Naive thymus-derived CD4-positive, alpha-beta T cell (primary cell): ENCODE measurements at regions of chr6 and their contacts with region 1.

Region 1: GRCh38 chr6:2634139-2634964 is 116.4 kb downstream of the MYLK4 start:
- DNase-seq: peak; percentile 65 to 88 (median 81)
- ATAC-seq: peak; percentile 97
- H3K4me3 ChIP-seq: peak overlapping the region; percentile 47
- H3K4me3 Mint-ChIP-seq: peak overlapping the region; percentile 65 to 85 (median 78)
- H3K27ac ChIP-seq: no peak overlapping the region
- H3K27ac Mint-ChIP-seq: peak overlapping the region in 4 of 9 donors; percentile 32 to 51 (median 46)
- H3K4me1 ChIP-seq: no peaks in the 10 kb centered on the region
- H3K4me1 Mint-ChIP-seq: peaks cover 0 to 7% (median 0%) of the 10 kb centered on the region in 7 donors
- H3K27me3 ChIP-seq: no peaks in the 10 kb centered on the region
- H3K27me3 Mint-ChIP-seq: peaks cover 14 to 37% (median 21%) of the 10 kb centered on the region in 5 donors

Region 2: GRCh38 chr6:797479-798077 is 1836.8 kb before region 1 on chr6:
- CTCF ChIA-PET with region 1: no interaction called
- POLR2A ChIA-PET with region 1: no interaction called
- intact Hi-C with region 1: loop called in 1 of 2 experiments (anchors 5 kb)
- DNase-seq: peak in 5 of 9 donors; percentile 18 to 36 (median 22)
- ATAC-seq: peak; percentile 61
- H3K4me3 ChIP-seq: no peak overlapping the region
- H3K4me3 Mint-ChIP-seq: no peak overlapping the region
- H3K27ac ChIP-seq: no peak overlapping the region
- H3K27ac Mint-ChIP-seq: no peak overlapping the region
- H3K4me1 ChIP-seq: no peaks in the 10 kb centered on the region
- H3K4me1 Mint-ChIP-seq: no peaks in the 10 kb centered on the region
- H3K27me3 ChIP-seq: peaks cover 0 to 11% of the 10 kb centered on the region in 2 donors
- H3K27me3 Mint-ChIP-seq: peaks cover 47 to 67% (median 51%) of the 10 kb centered on the region in 5 donors

Region 3: DNA sequence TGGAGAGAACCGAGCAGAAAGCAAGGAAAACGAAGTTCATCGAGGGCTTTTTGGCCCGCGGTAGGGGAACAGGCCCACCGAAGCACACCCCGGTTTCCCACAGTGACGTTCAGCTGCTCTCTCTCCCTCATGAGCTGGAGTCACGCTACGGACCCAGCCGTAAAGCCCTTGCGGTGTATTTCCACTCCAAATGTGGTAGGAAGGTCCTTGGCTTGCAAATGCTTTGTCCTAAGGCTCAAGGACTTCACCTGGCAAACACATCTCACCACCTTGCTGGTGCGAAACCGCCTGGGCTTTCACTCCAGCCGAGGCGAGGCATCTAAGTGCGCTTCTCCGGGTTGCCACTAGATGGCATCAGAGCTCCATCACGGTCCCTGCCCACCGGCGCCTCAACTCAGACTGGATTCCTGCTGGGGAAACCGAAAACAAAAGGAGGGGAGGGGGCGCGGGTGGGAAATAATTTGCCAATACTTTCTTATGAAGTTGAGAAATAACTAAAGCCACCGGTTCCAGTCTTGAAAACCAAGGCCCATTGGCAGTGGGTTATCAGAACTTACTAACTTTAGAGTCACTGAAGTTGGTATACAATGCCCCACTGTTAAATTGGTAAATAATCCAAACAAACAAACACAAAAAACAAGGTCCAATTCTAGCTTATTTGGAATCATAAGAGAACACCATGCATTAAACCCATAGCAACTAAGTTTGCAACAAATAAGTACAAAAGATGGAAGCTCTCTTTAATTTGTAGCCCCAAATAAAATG is 1038.1 kb before region 1 on chr6:
- CTCF ChIA-PET with region 1: interaction called, 58 read pairs
- POLR2A ChIA-PET with region 1: no interaction called
- intact Hi-C with region 1: loop called (anchors 1 kb)
- DNase-seq: peak in 8 of 9 donors; percentile 45 to 76 (median 63)
- ATAC-seq: peak; percentile 90
- H3K4me3 ChIP-seq: no peak overlapping the region
- H3K4me3 Mint-ChIP-seq: peak overlapping the region in 6 of 10 donors; percentile 7 to 42 (median 30)
- H3K27ac ChIP-seq: no peak overlapping the region
- H3K27ac Mint-ChIP-seq: peak overlapping the region in 1 of 9 donors; percentile 28
- H3K4me1 ChIP-seq: peaks cover 0 to 4% of the 10 kb centered on the region in 2 donors
- H3K4me1 Mint-ChIP-seq: peaks cover 4 to 9% (median 7%) of the 10 kb centered on the region in 7 donors
- H3K27me3 ChIP-seq: peaks cover 0 to 4% of the 10 kb centered on the region in 2 donors
- H3K27me3 Mint-ChIP-seq: peaks cover 59 to 68% (median 60%) of the 10 kb centered on the region in 5 donors

Region 4: DNA sequence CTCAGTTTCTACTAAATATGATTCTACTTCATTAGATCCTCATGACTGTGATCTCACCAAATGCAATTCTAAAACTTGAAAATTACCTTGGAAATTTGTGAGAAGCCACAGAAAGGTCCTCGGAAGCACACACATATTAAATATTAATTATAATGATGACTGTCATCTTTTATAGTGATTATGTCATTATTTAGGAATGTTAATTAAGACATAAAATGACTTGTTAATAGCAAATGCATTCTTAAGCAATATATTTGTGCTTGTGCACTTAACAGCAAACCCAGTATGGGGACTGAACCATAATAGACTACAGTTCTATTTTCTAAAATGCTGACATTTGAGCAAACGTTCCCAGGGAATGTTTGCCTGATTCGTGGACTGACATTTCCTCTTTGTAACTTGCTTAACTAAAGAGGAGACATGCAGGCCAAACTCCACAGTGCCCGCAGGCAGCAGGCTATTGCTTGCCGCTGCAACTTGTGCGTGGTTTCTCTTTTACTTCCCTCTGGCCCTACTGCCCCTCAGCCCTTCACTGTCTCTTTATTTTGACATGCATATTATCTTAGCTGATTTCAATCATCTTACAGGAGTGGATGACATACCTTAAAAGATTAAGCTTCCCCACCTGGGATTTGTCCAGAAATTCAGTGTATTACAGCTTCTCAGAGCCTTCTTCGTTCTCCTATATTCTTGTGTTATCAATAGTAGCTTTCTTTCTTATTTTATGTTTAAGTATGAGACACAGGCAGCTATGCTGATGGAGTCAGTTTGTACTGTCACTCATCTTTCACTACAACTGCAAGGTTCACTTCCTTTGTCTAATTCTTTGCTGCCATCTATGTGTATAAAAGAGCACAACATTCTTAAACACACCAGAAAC is 530.5 kb before region 1 on chr6:
- CTCF ChIA-PET with region 1: interaction called, 3 read pairs
- POLR2A ChIA-PET with region 1: no interaction called
- intact Hi-C with region 1: loop called (anchors 1 to 5 kb)
- DNase-seq: peak in 6 of 9 donors; percentile 11 to 48 (median 30)
- ATAC-seq: peak; percentile 69
- H3K4me3 ChIP-seq: no peak overlapping the region
- H3K4me3 Mint-ChIP-seq: no peak overlapping the region
- H3K27ac ChIP-seq: no peak overlapping the region
- H3K27ac Mint-ChIP-seq: no peak overlapping the region
- H3K4me1 ChIP-seq: no peaks in the 10 kb centered on the region
- H3K4me1 Mint-ChIP-seq: peaks cover 0 to 3% (median 0%) of the 10 kb centered on the region in 7 donors
- H3K27me3 ChIP-seq: no peaks in the 10 kb centered on the region
- H3K27me3 Mint-ChIP-seq: no peaks in the 10 kb centered on the region

Region 5: GRCh38 chr6:2209226-2209809 is 425.0 kb before region 1 on chr6:
- CTCF ChIA-PET with region 1: interaction called, 9 read pairs
- POLR2A ChIA-PET with region 1: no interaction called
- intact Hi-C with region 1: loop called in 1 of 2 experiments (anchors 2 kb)
- DNase-seq: peak in 2 of 9 donors; percentile 10 to 35
- ATAC-seq: peak; percentile 65
- H3K4me3 ChIP-seq: no peak overlapping the region
- H3K4me3 Mint-ChIP-seq: no peak overlapping the region
- H3K27ac ChIP-seq: no peak overlapping the region
- H3K27ac Mint-ChIP-seq: no peak overlapping the region
- H3K4me1 ChIP-seq: no peaks in the 10 kb centered on the region
- H3K4me1 Mint-ChIP-seq: peaks cover 0 to 14% (median 0%) of the 10 kb centered on the region in 7 donors
- H3K27me3 ChIP-seq: no peaks in the 10 kb centered on the region
- H3K27me3 Mint-ChIP-seq: peaks cover 0 to 3% (median 0%) of the 10 kb centered on the region in 5 donors

Region 6: GRCh38 chr6:2448820-2449571 is 185.4 kb before region 1 on chr6:
- CTCF ChIA-PET with region 1: no interaction called
- POLR2A ChIA-PET with region 1: no interaction called
- intact Hi-C with region 1: loop called (anchors 10 kb)
- DNase-seq: no peak
- ATAC-seq: peak; percentile 61
- H3K4me3 ChIP-seq: no peak overlapping the region
- H3K4me3 Mint-ChIP-seq: peak overlapping the region in 6 of 10 donors; percentile 14 to 59 (median 54)
- H3K27ac ChIP-seq: no peak overlapping the region
- H3K27ac Mint-ChIP-seq: no peak overlapping the region
- H3K4me1 ChIP-seq: no peaks in the 10 kb centered on the region
- H3K4me1 Mint-ChIP-seq: peaks cover 0 to 6% (median 2%) of the 10 kb centered on the region in 7 donors
- H3K27me3 ChIP-seq: no peaks in the 10 kb centered on the region
- H3K27me3 Mint-ChIP-seq: peaks cover 0 to 11% (median 7%) of the 10 kb centered on the region in 5 donors